ENCODE measurements at regions of chr15 and their contacts with region 1.

Region 1: DNA sequence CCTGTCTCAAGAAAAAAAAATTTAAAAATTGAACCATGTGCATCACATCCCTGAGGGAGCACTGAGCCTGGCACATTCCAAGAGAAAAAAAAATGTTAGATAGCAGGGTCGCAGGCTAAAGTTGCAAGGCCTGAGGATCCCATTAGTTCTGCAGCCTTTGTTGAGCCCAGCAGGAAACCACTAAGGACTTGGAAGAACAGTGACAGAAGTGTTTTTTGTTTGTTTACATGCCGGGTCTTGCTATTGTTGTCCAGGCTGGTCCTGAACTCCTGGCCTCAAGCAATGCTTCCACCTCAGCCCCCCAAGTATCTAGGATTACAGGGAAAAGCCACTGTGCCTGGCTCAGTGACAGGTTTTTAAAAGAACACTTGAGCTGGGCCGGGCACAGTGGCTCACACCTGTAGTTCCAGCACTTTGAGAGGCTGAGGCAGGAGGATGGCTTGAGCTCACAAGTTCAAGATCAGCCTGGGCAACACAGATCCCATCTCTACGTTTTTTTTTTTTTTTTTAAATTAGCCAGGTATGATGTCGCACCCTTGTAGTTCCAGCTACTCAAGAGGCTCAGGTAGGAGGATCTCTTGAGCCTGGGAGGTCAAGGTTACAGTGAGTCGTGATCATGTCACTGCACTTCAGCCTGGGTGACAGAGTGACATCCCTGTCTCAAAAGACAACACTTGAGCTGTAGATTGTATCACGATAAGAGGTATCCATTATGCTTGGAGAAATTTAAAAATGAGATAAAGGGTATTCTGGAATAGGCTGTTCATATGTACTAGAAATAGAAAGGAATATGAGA is 15.2 kb downstream of the CHAC1 start:
- DNase-seq: no peak
- ATAC-seq: no peak
- H3K4me3 ChIP-seq: no peak overlapping the region
- H3K27ac ChIP-seq: no peak overlapping the region
- H3K4me1 ChIP-seq: peaks cover 0 to 20% (median 8%) of the 10 kb centered on the region in 9 donors
- H3K27me3 ChIP-seq: no peaks in the 10 kb centered on the region
- CTCF ChIP-seq: no peak

Region 2: DNA sequence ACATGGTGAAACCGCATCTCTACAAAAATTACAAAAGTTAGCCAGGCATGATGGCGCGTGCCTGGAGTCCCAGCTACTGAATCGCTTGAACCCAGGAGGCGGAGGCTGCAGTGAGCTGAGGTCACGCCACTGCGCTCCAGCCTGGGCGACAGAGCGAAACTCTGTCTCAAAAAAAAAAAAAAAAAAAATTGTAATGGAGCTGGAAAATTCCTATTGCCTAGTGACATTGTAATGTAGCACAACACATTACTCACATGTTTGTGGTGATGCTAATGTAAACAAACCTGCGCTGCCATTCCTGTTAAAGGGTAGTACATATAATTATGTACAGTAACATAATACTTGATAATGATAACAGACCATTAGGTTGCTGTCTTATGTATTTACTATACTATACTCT is 335.3 kb before region 1 on chr15:
- intact Hi-C with region 1: no loop called
- DNase-seq: no peak
- ATAC-seq: no peak
- H3K4me3 ChIP-seq: no peak overlapping the region
- H3K27ac ChIP-seq: no peak overlapping the region
- H3K4me1 ChIP-seq: no peaks in the 10 kb centered on the region
- H3K27me3 ChIP-seq: no peaks in the 10 kb centered on the region
- CTCF ChIP-seq: no peak

Region 3: GRCh38 chr15:41001524-41002214 is 33.2 kb after region 1 on chr15:
- intact Hi-C with region 1: loop called in 1 of 10 experiments (anchors 5 kb)
- DNase-seq: no peak
- ATAC-seq: no peak
- H3K4me3 ChIP-seq: no peak overlapping the region
- H3K27ac ChIP-seq: no peak overlapping the region
- H3K4me1 ChIP-seq: peaks cover 0 to 17% (median 4%) of the 10 kb centered on the region in 9 donors
- H3K27me3 ChIP-seq: no peaks in the 10 kb centered on the region
- CTCF ChIP-seq: no peak

Region 4: DNA sequence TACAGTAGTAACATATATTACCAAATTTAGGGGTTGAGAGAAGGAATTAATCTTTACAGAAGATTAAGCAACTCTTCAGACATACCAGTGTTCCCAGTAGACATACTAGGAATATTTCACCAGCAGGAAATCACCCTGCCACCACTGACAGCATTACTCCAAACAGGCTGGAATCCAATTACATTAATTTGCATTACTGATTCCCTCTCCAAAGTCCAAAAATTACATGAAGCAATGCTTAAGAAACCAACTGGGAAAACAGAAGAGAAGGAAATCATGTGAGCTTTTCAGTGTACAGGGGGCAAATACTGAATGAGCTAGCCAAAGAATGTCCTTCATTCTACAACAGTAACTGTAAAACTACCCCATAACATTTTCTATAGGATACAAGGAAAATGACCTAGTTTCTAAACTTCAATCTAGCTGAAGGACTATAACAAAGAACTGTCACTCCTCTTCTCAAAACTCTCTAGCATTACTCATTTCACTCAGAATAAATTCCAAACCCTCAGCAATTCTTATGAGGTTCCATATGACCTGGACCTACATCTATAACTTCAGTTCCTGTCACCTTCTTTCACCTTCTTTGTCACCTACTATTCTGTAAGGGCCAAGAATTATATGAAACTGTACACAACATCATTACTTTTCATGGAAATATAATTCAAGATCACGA is 74.9 kb after region 1 on chr15:
- intact Hi-C with region 1: no loop called
- DNase-seq: no peak
- ATAC-seq: peak in 1 of 8 donors; percentile 23
- H3K4me3 ChIP-seq: no peak overlapping the region
- H3K27ac ChIP-seq: no peak overlapping the region
- H3K4me1 ChIP-seq: peaks cover 0 to 6% (median 0%) of the 10 kb centered on the region in 9 donors
- H3K27me3 ChIP-seq: no peaks in the 10 kb centered on the region
- CTCF ChIP-seq: no peak

Region 5: GRCh38 chr15:41340188-41340695 is 371.8 kb after region 1 on chr15:
- intact Hi-C with region 1: no loop called
- DNase-seq: no peak
- ATAC-seq: no peak
- H3K4me3 ChIP-seq: no peak overlapping the region
- H3K27ac ChIP-seq: no peak overlapping the region
- H3K4me1 ChIP-seq: peaks cover 0 to 12% (median 0%) of the 10 kb centered on the region in 9 donors
- H3K27me3 ChIP-seq: no peaks in the 10 kb centered on the region
- CTCF ChIP-seq: no peak